ENCODE measurements at regions of chr2 and their contacts with region 1.

Region 1: DNA sequence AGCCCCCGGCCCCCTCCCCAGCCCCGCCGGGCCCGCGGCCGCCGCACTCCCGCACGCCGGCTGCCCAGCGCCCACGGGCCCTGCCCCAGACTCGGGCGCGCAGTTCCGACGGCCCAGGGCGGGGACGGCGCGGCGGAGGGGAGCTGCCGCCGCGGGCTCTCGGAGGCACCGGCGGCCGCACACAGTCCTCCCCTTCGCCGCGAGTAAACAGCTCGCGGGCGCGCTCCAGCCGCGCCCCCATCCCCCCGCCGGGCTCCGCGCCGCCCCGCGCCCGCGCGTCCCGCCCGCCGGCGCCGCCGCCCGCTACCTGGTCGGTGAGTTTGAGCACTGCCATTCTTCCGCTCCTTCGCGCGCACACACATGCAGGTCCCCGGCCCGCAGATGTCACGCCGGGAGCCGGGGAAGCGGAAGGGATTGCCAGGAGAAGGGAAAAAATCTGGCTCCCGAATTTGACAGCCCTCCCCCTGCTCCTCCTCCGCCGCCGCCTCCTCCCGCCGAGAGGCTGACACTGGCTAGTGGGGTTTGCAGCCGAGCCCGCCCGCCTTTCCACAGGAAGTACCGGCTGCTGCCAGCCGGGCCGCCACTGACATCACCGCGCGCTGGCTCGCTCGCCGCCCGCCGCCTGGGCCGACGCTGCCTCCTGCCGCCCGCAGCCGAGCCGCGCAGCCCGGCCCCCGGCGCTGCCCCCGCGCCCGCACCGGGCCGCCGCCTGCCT is at the start of gene ANKRD44:
- DNase-seq: peak; percentile 96
- H3K4me3 Mint-ChIP-seq: peak within 1 kb of the TSS; percentile 91
- H3K27ac Mint-ChIP-seq: peak within 1 kb of the TSS; percentile 95
- H3K4me1 Mint-ChIP-seq: peaks cover 56% of the 10 kb centered on the region
- H3K27me3 Mint-ChIP-seq: no peaks in the 10 kb centered on the region
- total RNA-seq, gene ANKRD44: 130 and 147 TPM in 2 replicates

Region 2: DNA sequence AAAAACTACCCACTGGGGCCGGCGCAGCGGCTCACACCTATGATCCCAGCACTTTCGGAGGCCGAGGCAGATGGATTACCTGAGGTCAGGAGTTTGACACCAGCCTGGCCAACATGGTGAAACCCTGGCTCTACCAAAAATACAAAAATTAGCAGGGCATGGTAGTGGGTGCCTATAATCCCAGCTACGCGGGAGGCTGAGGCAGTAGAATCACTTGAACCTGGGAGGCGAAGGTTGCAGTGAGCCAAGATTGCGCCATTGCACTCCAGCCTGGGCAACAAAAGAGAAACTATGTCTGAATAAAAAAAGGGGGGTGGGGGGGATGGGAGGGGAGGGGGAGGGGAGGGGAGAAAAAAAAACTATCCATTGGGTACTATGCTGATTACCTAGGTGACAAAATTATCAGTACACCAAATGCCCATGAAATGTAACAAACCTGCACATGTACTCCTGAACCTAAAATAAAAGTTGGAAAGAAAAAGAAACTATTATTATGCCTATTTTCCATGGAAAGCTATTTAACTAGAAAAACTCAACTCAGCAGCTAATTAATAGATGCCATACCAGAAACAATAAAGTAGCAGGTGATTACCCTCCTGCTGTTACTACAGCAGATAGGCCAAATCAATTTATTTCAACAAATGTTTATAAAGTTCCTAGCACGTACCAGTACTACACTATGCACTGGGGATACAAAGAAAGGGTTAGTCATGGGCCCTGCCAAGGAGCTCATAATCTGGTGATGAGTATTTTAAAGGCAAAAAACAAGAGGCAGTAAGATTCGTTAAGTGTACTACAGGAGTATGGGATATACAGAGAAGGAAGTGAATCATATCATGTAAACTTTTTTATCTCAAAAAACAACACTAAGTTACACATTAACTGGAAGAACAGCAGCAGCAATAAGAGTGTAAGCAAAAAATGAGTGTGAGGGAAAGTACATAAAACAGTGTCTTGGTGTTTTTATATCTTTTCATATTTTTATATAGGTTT is 1766.2 kb before region 1 on chr2:
- intact Hi-C with region 1: loop called (anchors 10 kb)
- DNase-seq: peak; percentile 75
- H3K4me3 Mint-ChIP-seq: peak overlapping the region; percentile 29
- H3K27ac Mint-ChIP-seq: peak overlapping the region; percentile 91
- H3K4me1 Mint-ChIP-seq: peaks cover 67% of the 10 kb centered on the region
- H3K27me3 Mint-ChIP-seq: no peaks in the 10 kb centered on the region

Region 3: GRCh38 chr2:197113275-197113711 is 197.1 kb before region 1 on chr2:
- intact Hi-C with region 1: loop called (anchors 1 kb)
- DNase-seq: no peak
- H3K4me3 Mint-ChIP-seq: no peak overlapping the region
- H3K27ac Mint-ChIP-seq: no peak overlapping the region
- H3K4me1 Mint-ChIP-seq: peaks cover 18% of the 10 kb centered on the region
- H3K27me3 Mint-ChIP-seq: no peaks in the 10 kb centered on the region

Region 4: DNA sequence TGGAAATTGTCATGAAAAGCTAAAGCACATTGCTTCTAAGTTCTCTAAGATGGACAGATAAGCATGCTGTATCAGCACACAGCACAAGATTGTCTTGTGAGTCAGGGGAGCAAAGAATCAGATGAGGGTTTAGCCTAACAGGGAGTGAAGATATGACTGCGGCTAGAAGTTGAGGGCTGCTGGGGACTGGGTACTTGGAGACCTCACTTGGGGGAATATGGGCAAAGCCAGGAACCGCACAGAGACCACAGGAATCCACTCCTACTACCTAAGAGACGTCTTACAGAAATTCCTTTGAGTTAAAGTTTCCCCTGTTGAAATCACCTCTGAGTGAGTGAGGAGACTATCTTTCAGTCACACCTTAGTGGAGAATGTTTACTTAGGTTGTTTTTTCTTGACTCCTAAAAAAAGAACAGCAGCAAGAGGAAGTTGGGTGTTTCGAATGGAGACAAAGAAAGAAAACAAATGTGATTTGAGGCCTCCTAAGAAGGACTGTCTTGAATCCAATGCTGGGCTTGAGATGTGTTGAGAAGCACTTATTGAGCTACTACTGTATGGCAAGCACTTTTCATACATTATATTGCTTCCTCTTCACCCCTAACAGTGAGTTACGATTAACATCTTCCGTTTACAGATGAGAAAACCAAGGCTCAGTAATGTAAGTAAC is 100.6 kb before region 1 on chr2:
- intact Hi-C with region 1: loop called (anchors 1 kb)
- DNase-seq: peak; percentile 87
- H3K4me3 Mint-ChIP-seq: peak overlapping the region; percentile 68
- H3K27ac Mint-ChIP-seq: peak overlapping the region; percentile 97
- H3K4me1 Mint-ChIP-seq: peaks cover 93% of the 10 kb centered on the region
- H3K27me3 Mint-ChIP-seq: no peaks in the 10 kb centered on the region

Region 5: DNA sequence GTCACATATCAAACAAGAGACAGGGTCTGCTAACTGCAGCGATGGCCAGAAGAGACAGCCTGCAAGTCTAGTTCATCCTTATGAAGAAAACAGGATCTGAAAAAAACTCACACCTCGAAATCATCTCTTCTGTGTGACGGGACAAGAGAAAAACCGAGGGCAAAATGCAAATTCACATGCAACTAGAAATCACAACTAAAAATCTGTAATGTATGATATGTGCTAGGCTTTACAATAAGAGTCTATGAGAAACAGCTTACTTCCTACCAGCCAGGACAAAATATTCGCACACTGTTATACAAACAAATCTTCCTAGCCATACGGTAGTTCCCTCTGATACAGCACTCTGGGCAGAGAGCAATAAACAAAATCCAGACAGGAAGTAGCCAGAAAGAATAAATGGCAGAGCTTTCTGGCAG is 48.6 kb before region 1 on chr2:
- intact Hi-C with region 1: loop called (anchors 1 kb)
- DNase-seq: no peak
- H3K4me3 Mint-ChIP-seq: peak overlapping the region; percentile 77
- H3K27ac Mint-ChIP-seq: peak overlapping the region; percentile 87
- H3K4me1 Mint-ChIP-seq: peaks cover 71% of the 10 kb centered on the region
- H3K27me3 Mint-ChIP-seq: no peaks in the 10 kb centered on the region

Region 6: GRCh38 chr2:197356136-197356535 is 45.7 kb after region 1 on chr2:
- intact Hi-C with region 1: loop called (anchors 5 kb)
- DNase-seq: no peak
- H3K4me3 Mint-ChIP-seq: peak overlapping the region; percentile 22
- H3K27ac Mint-ChIP-seq: peak overlapping the region; percentile 80
- H3K4me1 Mint-ChIP-seq: peaks cover 15% of the 10 kb centered on the region
- H3K27me3 Mint-ChIP-seq: no peaks in the 10 kb centered on the region

Region 7: DNA sequence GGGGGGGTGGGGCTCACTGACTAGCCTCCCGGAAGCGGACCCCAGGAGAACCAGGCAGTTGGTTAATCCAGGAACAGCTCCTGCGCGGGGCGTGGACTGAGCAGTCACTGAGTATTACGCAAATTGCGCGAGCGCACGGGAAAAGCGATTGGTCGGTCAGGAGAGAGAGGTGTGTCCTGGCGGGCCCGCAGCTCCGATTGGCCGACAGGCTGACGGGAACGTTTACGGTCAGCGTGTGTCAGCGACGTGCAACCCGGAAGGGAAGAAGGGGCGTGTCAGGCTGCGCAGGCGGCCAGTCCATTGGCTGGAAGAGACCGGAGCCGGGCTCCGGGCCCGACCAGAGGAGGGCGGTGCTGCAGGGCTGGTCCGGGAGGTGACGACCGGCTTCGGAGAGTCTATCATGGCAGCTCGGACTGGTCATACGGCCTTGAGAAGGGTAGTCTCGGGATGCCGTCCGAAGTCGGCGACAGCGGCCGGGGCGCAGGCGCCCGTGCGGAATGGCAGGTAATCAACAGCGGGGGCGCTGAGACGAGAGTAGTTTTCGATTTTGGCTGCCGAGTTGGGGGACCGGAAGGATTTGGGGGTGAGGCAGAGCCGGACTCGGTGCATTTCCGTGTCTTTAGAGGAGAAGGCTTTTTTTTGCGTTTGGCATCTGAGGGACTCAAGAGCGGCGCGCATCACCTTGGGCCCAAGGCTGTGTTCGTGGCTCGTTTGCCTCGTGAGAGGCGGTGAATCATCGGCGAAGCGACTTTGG is 142.9 kb after region 1 on chr2 and contains the start of gene COQ10B:
- intact Hi-C with region 1: loop called (anchors 1 kb)
- DNase-seq: peak; percentile 100
- H3K4me3 Mint-ChIP-seq: peak within 1 kb of the TSS; percentile 100
- H3K27ac Mint-ChIP-seq: peak within 1 kb of the TSS; percentile 100
- H3K4me1 Mint-ChIP-seq: peaks cover 26% of the 10 kb centered on the region
- H3K27me3 Mint-ChIP-seq: no peaks in the 10 kb centered on the region
- total RNA-seq, gene COQ10B: 20.1 TPM in 2 replicates